Activated B cell treated with CpG ODN at 0.5 μM for 24 hours (primary cell): ENCODE measurements at regions of chr17 and their contacts with region 1.

Region 1: DNA sequence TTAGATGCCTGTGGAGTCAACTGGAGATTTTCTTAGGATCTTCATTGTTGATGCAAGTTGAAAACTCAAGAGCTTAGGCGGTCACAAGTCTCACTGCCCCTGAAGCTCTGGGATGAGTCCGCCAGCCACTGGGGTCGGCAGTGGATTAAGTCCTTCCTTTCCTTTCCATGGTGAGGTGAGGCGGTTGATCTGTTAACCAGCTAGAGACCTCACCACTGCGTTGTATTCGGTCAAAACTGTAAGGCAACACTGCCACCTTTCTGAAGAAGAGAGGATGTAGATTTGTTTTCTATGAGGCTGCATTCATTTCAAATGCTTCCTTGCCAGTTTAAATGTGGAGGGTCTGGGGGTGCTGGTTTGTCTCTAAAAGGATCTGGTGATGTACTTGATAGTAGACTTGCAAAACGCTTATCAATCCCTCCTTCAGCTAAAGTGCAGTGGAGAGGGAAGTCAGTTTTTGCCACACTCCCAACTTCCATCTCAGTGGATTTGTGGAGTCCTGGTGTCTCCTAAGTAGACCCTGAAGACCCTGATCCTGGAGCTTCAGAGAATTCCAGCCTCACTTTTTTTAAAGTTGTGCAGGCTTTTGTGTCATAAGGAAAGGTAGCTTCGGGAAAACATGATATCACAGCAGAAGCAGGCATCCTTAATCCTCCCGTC is 1.7 kb downstream of the MYOCD start:
- DNase-seq: peak; percentile 15
- ATAC-seq: peak; percentile 57
- H3K4me3 Mint-ChIP-seq: peak overlapping the region; percentile 62
- H3K27ac Mint-ChIP-seq: peak overlapping the region; percentile 27
- H3K4me1 Mint-ChIP-seq: peaks cover 11% of the 10 kb centered on the region
- H3K27me3 Mint-ChIP-seq: peaks cover 48% of the 10 kb centered on the region
- CTCF ChIP-seq: no peak

Region 2: DNA sequence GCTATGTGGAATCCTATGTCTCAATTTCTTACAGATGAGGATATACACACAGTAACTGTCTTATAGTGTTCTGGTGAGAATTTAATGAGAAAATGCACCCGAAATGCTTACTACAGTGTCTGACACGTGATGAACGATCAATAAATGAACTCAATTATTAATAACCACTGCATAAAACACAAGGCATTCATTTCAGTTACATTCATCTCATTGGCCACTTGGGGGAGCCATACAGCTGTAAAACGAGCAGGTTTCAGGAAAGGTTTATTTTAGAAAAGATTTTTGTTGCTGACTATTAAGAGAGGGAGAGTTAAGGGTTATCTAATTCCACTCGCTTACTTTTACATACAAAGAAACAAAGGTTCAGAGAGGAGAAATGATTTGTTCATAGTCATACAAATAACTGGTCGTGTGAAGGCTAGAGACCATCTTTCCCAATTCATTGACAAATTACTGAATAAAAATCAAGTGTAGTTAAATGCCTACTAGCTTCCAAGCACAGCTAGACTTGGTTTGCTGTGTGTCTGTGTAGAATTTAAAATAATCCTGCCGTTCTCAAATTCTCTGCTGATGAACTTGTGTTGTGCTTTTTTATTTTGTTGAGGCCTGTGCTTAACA is 486.7 kb before region 1 on chr17:
- CTCF ChIA-PET with region 1: interaction called, 16 read pairs
- POLR2A ChIA-PET with region 1: no interaction called
- intact Hi-C with region 1: loop called (anchors 1 kb)
- DNase-seq: no peak
- ATAC-seq: no peak
- H3K4me3 Mint-ChIP-seq: no peak overlapping the region
- H3K27ac Mint-ChIP-seq: no peak overlapping the region
- H3K4me1 Mint-ChIP-seq: no peaks in the 10 kb centered on the region
- H3K27me3 Mint-ChIP-seq: no peaks in the 10 kb centered on the region
- CTCF ChIP-seq: peak; percentile 65

Region 3: DNA sequence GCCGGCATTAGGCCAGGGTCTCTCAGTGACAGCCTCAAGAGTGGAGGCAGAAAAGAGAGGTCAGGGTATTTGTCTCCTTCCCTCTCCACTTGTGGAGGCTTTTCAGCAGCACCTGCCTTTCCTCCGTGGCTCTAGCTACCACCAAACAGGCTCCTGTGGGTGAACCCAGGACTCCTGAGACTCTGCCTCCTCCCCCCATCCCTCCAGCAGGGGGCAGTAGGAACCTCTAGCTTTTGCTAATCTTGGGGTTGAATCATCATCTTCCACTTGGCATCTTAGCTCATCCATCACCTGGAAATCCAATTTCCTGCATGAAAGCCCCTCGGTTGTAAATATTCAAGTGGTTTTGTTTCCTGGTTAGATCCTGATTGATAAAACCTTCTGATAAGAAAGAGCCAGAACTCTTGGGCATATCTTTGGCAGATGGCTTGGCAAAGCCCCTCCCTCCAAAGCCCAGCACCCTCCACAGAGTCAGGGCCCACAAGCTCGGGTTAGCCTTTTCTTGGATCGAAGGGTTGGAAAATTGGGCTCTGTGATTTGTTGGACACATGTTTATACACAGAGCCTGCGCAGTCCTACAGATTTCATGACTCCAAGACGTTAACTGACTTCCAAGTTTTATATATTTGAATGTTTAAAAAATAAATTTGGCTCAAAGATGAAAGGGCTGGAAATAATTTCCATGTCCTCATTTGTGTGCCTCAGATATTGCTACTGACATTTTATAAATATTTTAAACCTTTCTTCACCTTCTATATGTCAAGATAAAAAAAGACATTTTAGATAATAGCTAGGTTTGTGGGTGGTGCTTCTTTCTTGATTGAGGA is 324.6 kb before region 1 on chr17:
- CTCF ChIA-PET with region 1: interaction called, 12 read pairs
- POLR2A ChIA-PET with region 1: no interaction called
- intact Hi-C with region 1: loop called (anchors 1 kb)
- DNase-seq: no peak
- ATAC-seq: peak; percentile 37
- H3K4me3 Mint-ChIP-seq: no peak overlapping the region
- H3K27ac Mint-ChIP-seq: no peak overlapping the region
- H3K4me1 Mint-ChIP-seq: no peaks in the 10 kb centered on the region
- H3K27me3 Mint-ChIP-seq: no peaks in the 10 kb centered on the region
- CTCF ChIP-seq: no peak

Region 4: DNA sequence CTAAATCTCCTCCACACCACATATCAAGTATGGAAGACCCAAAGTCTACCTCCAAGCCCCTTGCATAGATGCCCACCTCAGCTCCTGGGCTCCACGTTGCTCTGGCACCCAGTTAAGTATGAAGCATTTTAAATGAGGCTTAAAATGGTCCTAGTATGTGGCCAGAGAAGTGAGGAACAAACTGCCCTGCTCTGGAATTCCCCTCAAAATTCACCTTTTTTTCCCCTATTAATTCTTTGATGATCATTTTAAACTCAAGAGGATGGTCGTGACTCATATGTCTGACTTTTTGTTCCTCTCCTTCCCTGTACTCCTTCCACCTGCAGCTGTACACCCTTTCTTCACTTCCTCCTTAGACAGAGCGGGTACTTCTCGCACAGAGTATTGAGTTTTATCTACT is 236.2 kb before region 1 on chr17:
- CTCF ChIA-PET with region 1: interaction called, 4 read pairs
- POLR2A ChIA-PET with region 1: interaction called, 8 read pairs
- intact Hi-C with region 1: loop called (anchors 1 kb)
- DNase-seq: no peak
- ATAC-seq: peak; percentile 83
- H3K4me3 Mint-ChIP-seq: peak overlapping the region; percentile 59
- H3K27ac Mint-ChIP-seq: peak overlapping the region; percentile 95
- H3K4me1 Mint-ChIP-seq: peaks cover 66% of the 10 kb centered on the region
- H3K27me3 Mint-ChIP-seq: no peaks in the 10 kb centered on the region
- CTCF ChIP-seq: no peak

Region 5: GRCh38 chr17:13002766-13003451 is 335.5 kb after region 1 on chr17:
- CTCF ChIA-PET with region 1: interaction called, 3 read pairs
- POLR2A ChIA-PET with region 1: no interaction called
- intact Hi-C with region 1: loop called (anchors 5 kb)
- DNase-seq: peak; percentile 43
- ATAC-seq: peak; percentile 56
- H3K4me3 Mint-ChIP-seq: no peak overlapping the region
- H3K27ac Mint-ChIP-seq: no peak overlapping the region
- H3K4me1 Mint-ChIP-seq: no peaks in the 10 kb centered on the region
- H3K27me3 Mint-ChIP-seq: no peaks in the 10 kb centered on the region
- CTCF ChIP-seq: no peak